Activated CD4-positive, alpha-beta T cell treated with anti-CD3 and anti-CD28 coated beads for 36 hours (primary cell): ENCODE measurements at regions of chrX and their contacts with region 1.

Region 1: DNA sequence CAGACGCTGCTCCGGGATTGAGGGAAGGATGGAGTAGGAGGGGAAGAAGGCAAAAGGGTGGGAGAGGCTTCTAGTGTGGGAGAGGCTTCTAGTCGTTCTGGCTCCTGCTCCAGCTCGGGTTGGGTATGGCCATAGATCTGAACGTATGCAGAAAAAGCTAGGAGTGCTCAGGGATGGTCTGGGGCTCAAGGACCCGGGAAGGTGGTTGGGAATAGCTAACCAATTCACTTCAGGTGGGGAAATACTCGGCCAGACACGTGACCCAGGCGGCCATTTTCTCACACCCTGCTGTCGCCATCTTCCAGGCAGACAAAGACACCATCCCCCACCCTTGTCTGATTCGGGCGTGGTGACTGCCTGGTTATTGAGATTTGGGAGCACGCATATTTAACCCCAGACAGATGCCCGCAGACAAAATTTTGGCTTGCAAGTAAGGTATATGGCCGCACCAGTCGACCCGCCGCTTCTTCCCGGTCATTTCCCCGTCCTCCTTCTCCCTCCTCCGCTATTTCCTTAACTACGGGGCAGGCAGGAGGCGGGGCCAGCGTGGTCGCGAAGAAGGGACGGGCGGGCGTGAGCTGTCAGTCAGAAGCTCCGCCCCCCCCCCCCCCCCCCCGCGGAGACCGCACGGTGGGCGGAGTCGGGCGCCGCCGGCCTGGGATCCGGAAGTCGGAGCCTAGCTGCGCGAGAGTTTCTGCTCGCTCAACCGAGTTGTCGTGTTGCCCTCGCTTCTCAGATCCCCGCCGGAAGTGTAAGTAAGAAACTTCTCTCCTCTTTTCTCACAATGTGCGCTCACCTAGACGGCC is at the start of gene GNL3L:
- DNase-seq: peak; percentile 89
- ATAC-seq: peak; percentile 88
- H3K4me3 Mint-ChIP-seq: peak within 1 kb of the TSS; percentile 90
- H3K27ac Mint-ChIP-seq: peak within 1 kb of the TSS; percentile 90
- H3K4me1 Mint-ChIP-seq: peaks cover 26% of the 10 kb centered on the region
- H3K27me3 Mint-ChIP-seq: no peaks in the 10 kb centered on the region
- total RNA-seq, gene GNL3L: 62.5 to 62.8 TPM

Region 2: DNA sequence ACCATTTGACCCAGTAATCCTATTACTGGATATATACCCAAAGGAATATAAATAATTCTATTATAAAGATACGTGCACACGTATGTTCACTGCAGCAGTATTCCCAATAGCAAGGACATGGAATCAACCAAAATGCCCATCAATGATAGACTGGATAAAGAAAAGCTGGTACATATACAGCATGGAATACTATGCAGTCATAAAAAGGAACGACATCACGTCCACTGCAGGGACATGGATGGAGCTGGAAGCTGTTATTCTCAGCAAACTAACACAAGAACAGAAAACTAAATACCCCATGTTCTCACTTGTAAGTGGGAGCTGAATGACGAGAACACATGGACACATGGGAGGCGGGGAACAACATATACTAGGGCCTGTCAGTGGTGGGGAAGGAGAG is 555.2 kb before region 1 on chrX:
- CTCF ChIA-PET with region 1: no interaction called
- POLR2A ChIA-PET with region 1: no interaction called
- intact Hi-C with region 1: no loop called
- DNase-seq: no peak
- ATAC-seq: no peak
- H3K4me3 Mint-ChIP-seq: no peak overlapping the region
- H3K27ac Mint-ChIP-seq: no peak overlapping the region
- H3K4me1 Mint-ChIP-seq: peaks cover 9% of the 10 kb centered on the region
- H3K27me3 Mint-ChIP-seq: no peaks in the 10 kb centered on the region

Region 3: GRCh38 chrX:54357414-54358377 is 172.1 kb before region 1 on chrX and contains the start of gene WNK3:
- CTCF ChIA-PET with region 1: no interaction called
- POLR2A ChIA-PET with region 1: no interaction called
- intact Hi-C with region 1: loop called in 1 of 2 experiments (anchors 1 kb)
- DNase-seq: peak; percentile 72
- ATAC-seq: peak; percentile 71
- H3K4me3 Mint-ChIP-seq: peak within 1 kb of the TSS; percentile 77
- H3K27ac Mint-ChIP-seq: peak within 1 kb of the TSS; percentile 65
- H3K4me1 Mint-ChIP-seq: peaks cover 17% of the 10 kb centered on the region
- H3K27me3 Mint-ChIP-seq: peaks cover 23% of the 10 kb centered on the region
- total RNA-seq, gene WNK3: 0.74 to 1.1 TPM